Dendritic cell treated with granulocyte-macrophage colony-stimulating factor and Interleukin-4, amounts not matched to agents 40 ng/mL and 50 ng/mL, for 4 days (primary cell): ENCODE measurements at regions of chr17 and their contacts with region 1.

Region 1: DNA sequence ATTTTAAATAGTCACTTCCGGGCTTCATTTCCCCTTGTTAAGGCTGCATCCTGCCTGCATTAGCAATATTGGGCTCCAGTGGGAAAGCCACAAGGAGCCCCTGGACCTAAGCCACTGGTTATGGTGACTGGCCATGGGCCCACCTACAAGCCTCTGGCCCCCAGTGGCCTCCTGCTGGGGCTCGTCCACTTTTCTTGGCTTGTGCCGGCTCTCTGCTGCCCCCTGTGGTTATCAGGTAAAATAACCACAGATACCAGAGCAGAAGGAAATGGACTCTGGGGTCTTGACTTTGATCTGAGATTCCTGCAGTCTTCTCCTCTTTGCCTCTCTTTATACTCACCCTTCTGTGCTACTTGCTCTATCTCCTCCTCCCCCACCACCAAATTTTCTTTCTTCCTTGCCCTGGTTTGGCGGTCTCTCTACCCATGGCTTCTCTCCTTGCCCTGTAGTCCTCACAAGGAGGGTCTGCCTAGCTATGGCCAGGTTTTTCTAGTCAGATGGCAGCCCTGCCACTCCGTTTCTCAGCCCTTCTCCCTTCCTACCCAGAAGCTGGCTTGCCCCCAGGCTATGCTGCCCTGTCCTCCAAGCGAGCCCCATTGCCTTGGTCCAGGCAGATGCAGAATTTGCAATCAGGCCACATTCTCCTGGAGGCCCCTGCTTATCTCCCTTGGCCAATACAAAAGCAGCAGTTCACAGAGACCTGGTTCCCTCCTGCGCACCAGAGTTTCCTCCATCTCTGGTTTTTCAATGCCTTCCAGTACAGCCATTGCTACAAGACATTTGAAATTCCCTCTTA is 82.9 kb upstream of the RCVRN start:
- H3K4me3 Mint-ChIP-seq: no peak overlapping the region
- H3K27ac Mint-ChIP-seq: peak overlapping the region; percentile 50
- H3K4me1 Mint-ChIP-seq: peaks cover 60% of the 10 kb centered on the region
- H3K27me3 Mint-ChIP-seq: no peaks in the 10 kb centered on the region

Region 2: GRCh38 chr17:10036511-10037061 is 48.6 kb after region 1 on chr17:
- intact Hi-C with region 1: loop called (anchors 5 kb)
- H3K4me3 Mint-ChIP-seq: no peak overlapping the region
- H3K27ac Mint-ChIP-seq: peak overlapping the region; percentile 81
- H3K4me1 Mint-ChIP-seq: peaks cover 82% of the 10 kb centered on the region
- H3K27me3 Mint-ChIP-seq: no peaks in the 10 kb centered on the region